IMR-90 (cell line): ENCODE measurements at regions of chr15 and their contacts with region 1.

Region 1: DNA sequence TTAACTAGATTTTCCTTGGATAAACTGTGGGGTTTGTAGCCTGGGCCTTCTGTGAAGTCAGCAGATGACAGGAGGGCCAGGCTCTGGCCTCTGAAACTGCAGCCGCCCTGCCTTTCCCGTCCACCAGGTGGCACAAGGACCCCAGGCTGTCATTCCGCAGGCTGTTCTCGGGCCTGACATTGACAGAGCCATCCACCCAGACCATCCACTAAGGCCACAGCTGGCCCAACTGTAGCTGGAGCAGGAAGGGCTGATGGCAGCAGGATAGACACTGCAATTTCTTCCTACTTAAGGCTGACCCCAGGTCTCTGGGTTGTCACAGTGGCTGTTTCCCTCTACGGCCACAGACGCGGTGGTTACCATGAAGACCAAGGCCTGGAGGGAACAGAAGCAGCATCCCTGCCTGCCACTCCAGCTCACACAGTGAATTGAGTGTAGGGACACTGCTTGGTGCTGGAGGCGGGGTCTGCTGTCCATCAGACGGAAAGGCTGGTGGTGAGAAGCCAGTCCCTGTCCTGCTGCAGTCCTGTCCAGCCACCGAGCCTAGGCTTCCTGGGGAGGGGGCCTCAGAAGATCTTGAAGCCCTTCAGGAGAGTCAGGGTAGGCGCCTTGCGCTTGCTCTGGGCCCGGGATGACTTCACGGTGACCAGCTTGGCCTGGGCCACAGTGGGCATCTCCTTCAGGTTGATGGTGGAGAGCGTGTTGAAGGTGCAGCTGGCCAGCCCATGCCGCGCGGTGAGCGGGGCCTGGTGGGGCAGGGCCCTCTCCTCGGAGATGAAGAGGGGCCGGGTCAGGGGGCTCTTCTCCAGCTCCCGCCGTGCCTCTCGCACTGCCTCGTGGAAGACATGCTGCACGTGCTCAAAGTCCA is 9.4 kb downstream of the SLC51B start:
- DNase-seq: peak; percentile 68
- ATAC-seq: peak; percentile 85
- H3K4me3 ChIP-seq: no peak overlapping the region
- H3K27ac ChIP-seq: no peak overlapping the region
- H3K4me1 ChIP-seq: peaks cover 21% of the 10 kb centered on the region
- H3K27me3 ChIP-seq: peaks cover 3% of the 10 kb centered on the region
- CTCF ChIP-seq: peak; percentile 97
- POLR2A ChIP-seq: 0 out of 2 replicates have a peak, but pooled peaks have one; percentile 42
- RAD21 ChIP-seq: peak; percentile 97

Region 2: DNA sequence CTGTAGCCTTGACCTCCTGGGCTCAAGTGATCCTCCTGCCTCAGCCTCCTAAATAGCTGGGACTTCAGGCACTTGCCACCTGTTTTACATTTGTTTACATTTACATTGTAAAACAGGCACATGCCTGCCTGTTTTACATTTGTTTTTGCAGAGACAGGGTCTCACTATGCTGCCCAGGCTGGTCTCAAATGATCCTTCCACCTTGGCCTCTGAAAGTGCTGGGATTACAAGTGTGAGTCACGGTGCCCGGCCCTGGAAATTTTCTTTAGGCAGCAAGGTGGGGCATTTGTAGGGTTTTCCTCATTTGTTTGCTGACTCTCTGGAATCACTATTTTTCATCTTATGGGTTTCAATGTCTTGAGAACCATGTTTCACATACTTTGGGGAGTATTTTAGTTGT is 254.1 kb before region 1 on chr15:
- CTCF ChIA-PET with region 1: no interaction called
- POLR2A ChIA-PET with region 1: no interaction called
- dilution Hi-C with region 1: no loop called
- in situ Hi-C with region 1: no loop called
- intact Hi-C with region 1: no loop called
- DNase-seq: no peak
- ATAC-seq: no peak
- H3K4me3 ChIP-seq: no peak overlapping the region
- H3K27ac ChIP-seq: no peak overlapping the region
- H3K4me1 ChIP-seq: peaks cover 6% of the 10 kb centered on the region
- H3K27me3 ChIP-seq: no peaks in the 10 kb centered on the region
- CTCF ChIP-seq: no peak
- POLR2A ChIP-seq: no peak
- RAD21 ChIP-seq: no peak

Region 3: GRCh38 chr15:65086017-65086679 is 31.6 kb after region 1 on chr15:
- CTCF ChIA-PET with region 1: interaction called, 74 read pairs
- POLR2A ChIA-PET with region 1: interaction called, 6 read pairs
- dilution Hi-C with region 1: no loop called
- in situ Hi-C with region 1: loop called (anchors 5 kb)
- intact Hi-C with region 1: loop called (anchors 1 kb)
- DNase-seq: peak; percentile 16
- ATAC-seq: no peak
- H3K4me3 ChIP-seq: no peak overlapping the region
- H3K27ac ChIP-seq: no peak overlapping the region
- H3K4me1 ChIP-seq: peaks cover 36% of the 10 kb centered on the region
- H3K27me3 ChIP-seq: peaks cover 39% of the 10 kb centered on the region
- CTCF ChIP-seq: peak; percentile 45
- POLR2A ChIP-seq: no peak
- RAD21 ChIP-seq: peak; percentile 40

Region 4: DNA sequence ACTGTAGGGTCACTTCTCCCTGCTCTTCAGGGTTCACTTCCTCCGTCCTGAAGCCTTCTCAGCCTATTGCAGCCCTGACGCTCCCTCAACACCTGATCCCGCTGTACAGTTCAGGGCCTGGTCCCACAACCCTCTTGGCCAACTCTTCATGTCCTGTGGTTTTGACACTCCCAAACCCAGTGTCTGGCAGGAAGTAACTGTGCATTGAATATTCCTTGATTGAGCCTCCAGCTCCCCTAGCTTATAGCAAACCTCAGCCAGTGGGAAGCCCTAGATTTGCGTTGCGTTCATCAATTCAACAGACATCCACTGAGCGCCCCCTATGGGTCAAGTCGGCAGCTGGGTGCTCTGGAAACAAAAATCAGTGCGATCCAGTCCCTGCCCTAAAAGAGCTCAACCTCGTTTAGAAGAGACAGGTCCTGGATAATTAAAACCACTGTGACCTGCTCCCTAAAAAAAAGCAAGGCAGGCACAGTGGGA is 46.9 kb after region 1 on chr15:
- CTCF ChIA-PET with region 1: interaction called, 26 read pairs
- POLR2A ChIA-PET with region 1: no interaction called
- dilution Hi-C with region 1: no loop called
- in situ Hi-C with region 1: no loop called
- intact Hi-C with region 1: loop called (anchors 1 kb)
- DNase-seq: peak; percentile 63
- ATAC-seq: peak; percentile 96
- H3K4me3 ChIP-seq: no peak overlapping the region
- H3K27ac ChIP-seq: no peak overlapping the region
- H3K4me1 ChIP-seq: no peaks in the 10 kb centered on the region
- H3K27me3 ChIP-seq: no peaks in the 10 kb centered on the region
- CTCF ChIP-seq: peak; percentile 79
- POLR2A ChIP-seq: no peak
- RAD21 ChIP-seq: peak; percentile 80

Region 5: GRCh38 chr15:65184868-65185738 is 130.5 kb after region 1 on chr15 and contains the start of gene CLPX:
- CTCF ChIA-PET with region 1: no interaction called
- POLR2A ChIA-PET with region 1: no interaction called
- dilution Hi-C with region 1: no loop called
- in situ Hi-C with region 1: no loop called
- intact Hi-C with region 1: loop called (anchors 2 kb)
- DNase-seq: peak; percentile 89
- ATAC-seq: peak; percentile 91
- H3K4me3 ChIP-seq: peak within 1 kb of the TSS; percentile 87
- H3K27ac ChIP-seq: peak within 1 kb of the TSS; percentile 94
- H3K4me1 ChIP-seq: no peaks in the 10 kb centered on the region
- H3K27me3 ChIP-seq: no peaks in the 10 kb centered on the region
- CTCF ChIP-seq: no peak
- POLR2A ChIP-seq: peak; percentile 76
- RAD21 ChIP-seq: no peak
- total RNA-seq, gene CLPX: 25.8 and 29.4 TPM in 2 replicates